ENCODE measurements at regions of chr14 and their contacts with region 1.

Region 1: GRCh38 chr14:24058260-24058950 is 6.6 kb downstream of the CARMIL3 start:
- DNase-seq: peak in 2 of 3 donors; percentile 20 to 42
- H3K4me3 ChIP-seq: no peak overlapping the region
- H3K27ac ChIP-seq: no peak overlapping the region
- H3K4me1 ChIP-seq: no peaks in the 10 kb centered on the region
- H3K27me3 ChIP-seq: peaks cover 0 to 7% (median 1%) of the 10 kb centered on the region in 5 experiments

Region 2: DNA sequence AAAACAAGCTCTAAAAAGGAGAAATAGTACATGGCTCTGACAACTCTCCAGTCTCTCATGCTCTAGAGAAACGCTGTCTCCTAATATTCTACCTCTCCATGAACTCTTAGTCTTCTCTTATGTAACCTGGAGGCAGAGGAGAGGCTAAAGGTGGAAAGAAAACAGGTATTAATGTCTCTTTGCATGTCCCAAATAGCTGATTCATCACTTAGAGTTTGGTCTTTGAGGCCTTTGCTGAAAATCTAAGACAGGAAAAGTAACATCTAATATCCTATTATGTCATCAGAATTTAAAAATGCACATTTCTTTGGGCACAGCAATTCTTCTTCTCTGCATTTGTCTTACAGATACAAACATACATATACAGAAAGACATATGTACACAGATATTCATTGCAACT is 295.0 kb before region 1 on chr14:
- CTCF ChIA-PET with region 1: no interaction called
- POLR2A ChIA-PET with region 1: no interaction called
- DNase-seq: no peak
- H3K4me3 ChIP-seq: no peak overlapping the region
- H3K27ac ChIP-seq: no peak overlapping the region
- H3K4me1 ChIP-seq: no peaks in the 10 kb centered on the region
- H3K27me3 ChIP-seq: no peaks in the 10 kb centered on the region

Region 3: GRCh38 chr14:24042746-24043145 is 15.7 kb before region 1 on chr14:
- CTCF ChIA-PET with region 1: interaction called, 16 read pairs
- POLR2A ChIA-PET with region 1: no interaction called
- DNase-seq: no peak
- H3K4me3 ChIP-seq: no peak overlapping the region
- H3K27ac ChIP-seq: no peak overlapping the region
- H3K4me1 ChIP-seq: no peaks in the 10 kb centered on the region
- H3K27me3 ChIP-seq: no peaks in the 10 kb centered on the region

Region 4: GRCh38 chr14:24075485-24076301 is 17.3 kb after region 1 on chr14:
- CTCF ChIA-PET with region 1: interaction called, 49 read pairs
- POLR2A ChIA-PET with region 1: interaction called, 7 read pairs
- DNase-seq: no peak
- H3K4me3 ChIP-seq: no peak overlapping the region
- H3K27ac ChIP-seq: no peak overlapping the region
- H3K4me1 ChIP-seq: peaks cover 4 to 15% (median 14%) of the 10 kb centered on the region in 4 experiments
- H3K27me3 ChIP-seq: peaks cover 0 to 3% (median 0%) of the 10 kb centered on the region in 5 experiments

Region 5: GRCh38 chr14:24080888-24081738 is 22.7 kb after region 1 on chr14:
- CTCF ChIA-PET with region 1: interaction called, 20 read pairs
- POLR2A ChIA-PET with region 1: interaction called, 7 read pairs
- DNase-seq: peak; percentile 43 to 84 (median 80)
- H3K4me3 ChIP-seq: peak overlapping the region; percentile 60 to 81 (median 67)
- H3K27ac ChIP-seq: no peak overlapping the region
- H3K4me1 ChIP-seq: peaks cover 7 to 27% (median 26%) of the 10 kb centered on the region in 4 experiments
- H3K27me3 ChIP-seq: peaks cover 0 to 12% (median 7%) of the 10 kb centered on the region in 5 experiments

Region 6: GRCh38 chr14:24108336-24108874 is 50.0 kb after region 1 on chr14:
- CTCF ChIA-PET with region 1: interaction called, 188 read pairs
- POLR2A ChIA-PET with region 1: no interaction called
- DNase-seq: no peak
- H3K4me3 ChIP-seq: peak overlapping the region in 1 of 7 experiments; percentile 38
- H3K27ac ChIP-seq: peak overlapping the region in 1 of 2 experiments; percentile 17
- H3K4me1 ChIP-seq: peaks cover 3 to 20% (median 9%) of the 10 kb centered on the region in 4 experiments
- H3K27me3 ChIP-seq: no peaks in the 10 kb centered on the region

Region 7: DNA sequence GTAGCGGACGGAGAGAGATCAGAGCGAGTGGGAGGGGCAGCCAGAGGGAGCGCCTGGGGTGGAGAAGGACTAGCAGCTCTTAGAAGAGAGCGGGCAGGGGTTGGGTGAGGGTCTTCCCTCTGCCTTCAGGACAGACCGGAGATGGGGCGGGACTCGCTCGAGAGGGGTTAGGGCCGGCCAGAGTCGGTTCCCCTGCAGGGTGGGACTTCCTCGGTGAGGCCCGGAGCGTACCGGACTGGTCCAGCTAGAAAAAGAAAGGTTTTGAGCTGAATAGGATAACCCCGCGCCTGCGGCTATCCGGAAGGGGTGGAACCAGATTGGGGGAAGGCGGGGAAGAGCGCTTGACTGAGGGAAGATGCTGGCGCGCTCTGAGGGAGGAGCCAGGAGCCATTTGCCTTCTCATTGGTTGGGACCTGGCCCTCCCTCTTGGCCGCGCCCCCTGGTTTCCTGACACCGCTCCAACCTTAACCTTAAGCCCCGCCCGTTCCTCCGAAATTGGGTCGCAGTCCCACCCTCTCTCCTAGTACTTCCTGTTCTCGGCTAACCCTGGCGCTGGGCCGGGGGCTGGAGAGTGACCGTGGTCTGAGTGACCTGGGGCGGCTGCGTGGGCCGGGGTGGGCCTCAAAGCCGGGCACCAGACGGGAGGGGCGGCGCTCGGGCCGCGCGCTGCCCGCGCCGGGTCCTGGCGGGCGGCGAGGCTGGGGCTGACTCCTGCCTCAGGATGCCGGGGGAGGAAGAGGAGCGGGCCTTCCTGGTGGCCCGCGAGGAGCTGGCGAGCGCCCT is 88.8 kb after region 1 on chr14 and contains the start of gene RNF31:
- CTCF ChIA-PET with region 1: interaction called, 11 read pairs
- POLR2A ChIA-PET with region 1: no interaction called
- DNase-seq: peak; percentile 99
- H3K4me3 ChIP-seq: peak within 1 kb of the TSS; percentile 56 to 100 (median 97)
- H3K27ac ChIP-seq: peak within 1 kb of the TSS; percentile 71 to 85
- H3K4me1 ChIP-seq: peaks cover 4 to 29% (median 27%) of the 10 kb centered on the region in 4 experiments
- H3K27me3 ChIP-seq: no peaks in the 10 kb centered on the region